Activated CD8-positive, alpha-beta T cell treated with anti-CD3 and anti-CD28 coated beads for 36 hours (primary cell): ENCODE measurements at regions of chr13 and their contacts with region 1.

Region 1: DNA sequence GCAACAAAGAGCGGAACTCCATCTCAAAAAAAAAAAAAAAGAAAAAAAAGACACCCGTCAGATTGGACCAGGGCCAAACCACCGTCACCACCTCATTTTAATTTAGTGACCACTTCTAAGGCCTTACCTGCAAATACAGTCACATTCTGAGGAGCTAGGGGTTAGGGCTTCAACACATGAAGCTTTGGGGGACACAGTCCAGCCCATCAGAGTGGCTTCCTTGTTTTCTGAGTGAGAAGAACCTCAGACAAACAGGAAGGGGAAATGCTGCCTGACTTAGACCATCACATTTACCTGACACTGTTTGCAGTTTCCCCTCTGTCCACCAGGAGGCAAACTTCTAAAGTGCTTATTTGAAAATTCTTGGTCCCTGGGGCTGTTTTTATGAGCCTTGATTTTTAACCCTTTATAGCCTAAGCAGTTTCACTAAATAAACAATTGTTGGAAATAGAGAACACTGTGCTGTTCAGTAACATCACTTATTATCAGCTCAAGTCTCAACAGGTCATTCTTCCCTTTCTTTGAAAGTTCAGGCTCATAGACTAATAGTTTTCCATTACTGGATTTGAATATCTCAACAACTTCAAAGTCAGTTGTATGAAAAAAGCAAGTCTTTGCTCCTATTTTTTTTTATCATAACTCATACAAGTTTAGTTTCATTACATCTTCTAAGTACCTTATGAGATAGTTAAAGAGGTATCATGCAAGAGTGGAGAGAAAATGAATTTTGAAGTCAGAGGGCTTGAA is 74.9 kb upstream of the WASF3 start:
- DNase-seq: peak; percentile 80
- ATAC-seq: peak; percentile 97
- H3K4me3 Mint-ChIP-seq: no peak overlapping the region
- H3K27ac Mint-ChIP-seq: no peak overlapping the region
- H3K4me1 Mint-ChIP-seq: peaks cover 11% of the 10 kb centered on the region
- H3K27me3 Mint-ChIP-seq: no peaks in the 10 kb centered on the region
- CTCF ChIP-seq: peak; percentile 91

Region 2: DNA sequence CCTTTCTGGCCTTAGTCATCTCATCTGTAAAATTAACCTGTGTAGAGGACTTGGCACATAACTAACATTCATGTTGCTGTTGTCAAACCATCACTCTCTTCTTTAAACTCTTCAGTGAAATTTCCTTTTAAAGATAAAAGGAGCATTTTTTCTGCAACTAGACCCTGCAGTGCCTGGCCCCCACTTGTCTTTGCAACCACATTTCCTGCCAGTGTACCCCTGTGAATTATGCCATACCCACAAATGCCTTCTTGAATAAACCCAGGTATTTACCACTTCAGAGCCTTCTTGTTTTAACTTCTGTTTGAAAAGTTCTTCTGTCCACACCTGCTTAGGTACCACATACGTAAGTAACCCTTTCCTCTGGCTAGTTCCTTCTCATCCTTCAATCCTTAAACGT is 109.9 kb before region 1 on chr13:
- CTCF ChIA-PET with region 1: no interaction called
- POLR2A ChIA-PET with region 1: no interaction called
- intact Hi-C with region 1: no loop called
- DNase-seq: no peak
- ATAC-seq: no peak
- H3K4me3 Mint-ChIP-seq: no peak overlapping the region
- H3K27ac Mint-ChIP-seq: peak overlapping the region; percentile 4
- H3K4me1 Mint-ChIP-seq: peaks cover 11% of the 10 kb centered on the region
- H3K27me3 Mint-ChIP-seq: no peaks in the 10 kb centered on the region
- CTCF ChIP-seq: no peak

Region 3: DNA sequence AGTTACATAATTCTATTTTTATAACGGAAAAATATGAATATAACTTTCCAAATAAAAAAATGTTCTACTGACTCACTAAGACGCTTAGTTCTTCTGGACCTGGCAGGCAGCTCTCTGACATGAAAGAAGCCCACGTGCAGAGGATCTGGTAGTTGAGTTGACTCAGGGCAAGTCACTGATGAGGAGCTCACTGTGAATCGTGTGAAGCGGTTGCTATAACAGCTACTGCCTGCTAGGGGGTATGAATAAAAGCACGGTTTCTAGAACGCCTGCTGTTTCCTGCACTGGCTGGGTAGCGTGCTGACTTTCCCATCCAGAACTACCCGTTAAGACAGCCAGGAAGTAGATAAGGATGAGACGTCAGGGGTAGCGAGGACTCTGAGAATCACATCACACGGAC is 20.2 kb after region 1 on chr13:
- CTCF ChIA-PET with region 1: interaction called, 14 read pairs
- POLR2A ChIA-PET with region 1: no interaction called
- intact Hi-C with region 1: no loop called
- DNase-seq: peak; percentile 52
- ATAC-seq: peak; percentile 93
- H3K4me3 Mint-ChIP-seq: no peak overlapping the region
- H3K27ac Mint-ChIP-seq: no peak overlapping the region
- H3K4me1 Mint-ChIP-seq: peaks cover 13% of the 10 kb centered on the region
- H3K27me3 Mint-ChIP-seq: peaks cover under 1% of the 10 kb centered on the region
- CTCF ChIP-seq: peak; percentile 32